Panc1 (cell line): ENCODE measurements at regions of chr9 and their contacts with region 1.

Region 1: GRCh38 chr9:95510709-95511615 is 5.8 kb downstream of the PTCH1 start:
- DNase-seq: no peak
- ATAC-seq: peak; percentile 79
- H3K4me3 ChIP-seq: peak overlapping the region; percentile 78 to 82
- H3K27ac ChIP-seq: peak overlapping the region; percentile 78
- H3K4me1 ChIP-seq: no peaks in the 10 kb centered on the region
- H3K27me3 ChIP-seq: no peaks in the 10 kb centered on the region
- CTCF ChIP-seq: no peak

Region 2: DNA sequence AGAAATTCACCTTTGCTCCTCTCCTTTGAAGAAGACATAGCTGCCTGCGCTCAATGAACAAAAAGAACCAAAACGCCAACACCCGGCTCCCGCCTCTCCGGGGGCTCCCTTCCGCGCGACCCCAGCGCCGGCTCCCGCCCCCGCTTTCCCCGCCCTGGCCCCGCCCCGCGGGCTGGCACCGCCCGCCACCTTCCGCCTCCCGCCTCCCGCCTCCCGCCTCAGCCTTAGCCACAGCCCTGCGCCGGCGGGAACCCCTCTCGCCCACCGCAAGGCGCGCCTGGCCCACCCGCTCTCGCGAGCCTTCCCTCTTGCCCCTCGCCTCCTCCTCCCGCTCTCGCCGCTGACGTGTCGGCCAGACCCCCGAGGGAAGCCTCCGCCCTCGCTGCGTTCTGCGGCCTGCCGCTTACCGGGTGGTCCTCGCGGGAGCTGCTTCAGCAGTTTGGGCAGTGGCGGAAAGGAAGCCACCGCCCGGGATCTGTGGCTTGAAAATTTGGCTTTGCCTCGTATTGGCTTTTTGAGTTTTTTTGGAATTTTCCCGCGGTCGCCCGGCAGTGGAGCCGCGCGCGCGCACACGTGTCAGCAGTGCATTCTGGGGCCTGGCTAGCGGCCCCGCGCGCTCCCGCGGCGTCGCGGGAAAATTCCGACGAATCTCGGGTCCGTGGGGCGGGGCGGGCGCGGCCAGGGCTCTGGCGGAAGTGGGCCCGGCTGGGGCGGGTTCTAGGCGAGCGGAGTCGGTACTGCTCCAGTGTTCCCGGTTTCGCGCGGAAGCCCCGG is 193.7 kb before region 1 on chr9 and contains the start of gene FANCC:
- CTCF ChIA-PET with region 1: no interaction called
- POLR2A ChIA-PET with region 1: no interaction called
- in situ Hi-C with region 1: no loop called
- intact Hi-C with region 1: loop called (anchors 5 kb)
- DNase-seq: no peak
- ATAC-seq: peak; percentile 94
- H3K4me3 ChIP-seq: peak within 1 kb of the TSS; percentile 80 to 81
- H3K27ac ChIP-seq: peak within 1 kb of the TSS; percentile 97
- H3K4me1 ChIP-seq: peaks cover 15% of the 10 kb centered on the region; the same call in 1 of the 2 replicates
- H3K27me3 ChIP-seq: no peaks in the 10 kb centered on the region
- CTCF ChIP-seq: no peak
- total RNA-seq, gene FANCC: 17.8 TPM

Region 3: DNA sequence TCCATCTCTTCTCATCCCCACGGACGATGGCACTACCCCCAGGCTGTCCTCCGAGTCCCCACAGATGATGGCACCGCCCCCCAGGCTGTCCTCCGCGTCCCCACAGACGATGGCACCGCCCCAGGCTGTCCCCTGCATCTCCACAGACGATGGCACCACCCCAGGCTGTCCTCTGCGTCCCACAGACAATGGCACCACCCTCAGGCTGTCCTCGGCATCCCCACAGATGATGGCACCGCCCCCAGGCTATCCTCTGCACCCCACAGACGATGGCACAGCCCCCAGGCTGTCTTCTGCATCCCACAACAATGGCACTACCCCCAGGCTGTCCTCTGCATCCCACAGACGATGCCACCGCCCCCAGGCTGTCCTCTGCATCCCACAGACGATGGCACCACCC is 63.2 kb after region 1 on chr9:
- CTCF ChIA-PET with region 1: no interaction called
- POLR2A ChIA-PET with region 1: no interaction called
- in situ Hi-C with region 1: no loop called
- intact Hi-C with region 1: no loop called
- DNase-seq: no peak
- ATAC-seq: no peak
- H3K4me3 ChIP-seq: no peak overlapping the region; a peak in 1 of 4 replicates
- H3K27ac ChIP-seq: no peak overlapping the region
- H3K4me1 ChIP-seq: peaks cover 12% of the 10 kb centered on the region
- H3K27me3 ChIP-seq: no peaks in the 10 kb centered on the region
- CTCF ChIP-seq: no peak

Region 4: DNA sequence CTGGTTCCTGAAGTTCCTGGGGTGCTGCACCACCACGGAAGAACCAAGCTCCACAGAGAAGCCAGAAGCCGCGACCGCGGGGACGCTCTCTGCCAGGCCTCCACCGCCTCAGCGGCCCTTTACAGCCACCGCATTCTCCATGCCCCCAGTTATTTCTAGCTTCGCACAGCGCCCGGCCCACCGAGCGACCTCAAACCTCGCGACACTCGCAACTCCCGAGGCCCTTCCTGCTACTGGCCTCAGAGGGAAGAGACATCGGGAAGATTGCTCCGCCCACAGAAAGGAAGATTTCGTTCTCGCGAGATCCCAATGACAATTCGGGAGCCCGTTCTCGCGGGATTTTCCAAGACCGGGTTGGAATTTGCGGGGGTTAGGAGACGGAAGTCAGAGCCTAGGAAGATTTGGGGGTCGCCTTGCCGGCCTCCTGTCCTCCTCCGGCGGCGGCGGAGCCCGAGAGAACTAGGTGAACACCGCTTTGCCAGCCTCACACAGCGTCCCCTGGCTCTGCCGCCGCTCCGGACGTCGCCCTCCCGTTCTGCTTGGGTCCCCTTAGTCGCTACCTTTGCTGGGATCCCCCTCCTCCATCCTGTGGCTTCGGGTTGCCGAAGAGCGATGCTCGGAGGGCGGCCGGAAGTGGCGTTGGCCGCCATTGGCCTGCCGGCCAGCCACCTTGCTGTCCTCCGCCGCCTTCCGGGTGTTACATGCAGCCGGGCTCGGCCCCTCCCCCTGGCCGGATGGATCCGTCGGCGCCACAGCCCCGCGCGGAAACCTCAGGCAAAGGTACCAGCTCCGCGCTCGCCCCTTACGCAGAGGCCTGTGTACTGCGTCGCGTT is 364.6 kb after region 1 on chr9 and contains the start of gene ERCC6L2:
- CTCF ChIA-PET with region 1: no interaction called
- POLR2A ChIA-PET with region 1: no interaction called
- in situ Hi-C with region 1: no loop called
- intact Hi-C with region 1: loop called (anchors 5 kb)
- DNase-seq: peak; percentile 93
- ATAC-seq: peak; percentile 96
- H3K4me3 ChIP-seq: no peak within 1 kb of the TSS
- H3K27ac ChIP-seq: no peak within 1 kb of the TSS; the same call in 1 of the 2 replicates
- H3K4me1 ChIP-seq: peaks cover 18% of the 10 kb centered on the region
- H3K27me3 ChIP-seq: no peaks in the 10 kb centered on the region
- CTCF ChIP-seq: no peak
- total RNA-seq, gene ERCC6L2: 39.7 TPM

Region 5: DNA sequence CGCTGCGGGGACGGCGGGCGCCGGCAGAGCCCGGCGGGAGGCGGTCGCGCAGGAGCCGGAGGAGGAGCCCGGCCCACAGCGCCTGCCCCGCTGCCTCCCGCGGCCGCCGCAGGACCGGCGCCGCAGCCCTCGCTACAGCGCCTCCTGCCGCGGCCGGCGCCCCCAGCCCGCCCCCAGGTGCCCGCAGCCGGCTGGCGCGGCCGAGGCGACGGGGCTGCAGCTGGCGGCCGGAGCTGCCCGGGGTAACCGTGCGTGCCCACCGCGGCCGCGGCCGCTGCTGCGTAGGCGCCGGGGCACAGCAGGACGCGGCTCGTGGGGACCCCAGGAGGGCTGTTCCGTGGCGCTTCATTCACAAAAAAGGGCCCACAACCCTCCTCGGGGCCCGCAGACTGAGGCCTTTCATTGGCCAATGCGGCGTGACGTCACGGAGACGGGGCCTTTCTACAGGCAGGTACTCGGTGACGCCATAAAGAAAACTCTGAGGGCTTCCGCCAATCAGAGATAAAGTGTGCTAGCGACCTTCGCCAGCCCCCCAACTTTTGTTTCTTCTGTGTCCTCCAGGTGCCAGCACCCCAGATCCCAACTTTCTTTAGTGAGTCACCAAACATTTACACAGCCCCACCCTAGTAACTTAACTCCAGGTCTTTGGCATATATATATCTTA is 1108.7 kb after region 1 on chr9 and contains the start of gene CDC14B:
- CTCF ChIA-PET with region 1: no interaction called
- POLR2A ChIA-PET with region 1: no interaction called
- in situ Hi-C with region 1: no loop called
- intact Hi-C with region 1: loop called (anchors 10 kb)
- DNase-seq: peak; percentile 64
- ATAC-seq: peak; percentile 90
- H3K4me3 ChIP-seq: peak within 1 kb of the TSS; percentile 57 to 66
- H3K27ac ChIP-seq: peak within 1 kb of the TSS; percentile 80
- H3K4me1 ChIP-seq: peaks cover 21% of the 10 kb centered on the region
- H3K27me3 ChIP-seq: no peaks in the 10 kb centered on the region
- CTCF ChIP-seq: peak; percentile 68
- total RNA-seq, gene CDC14B: 11.8 TPM